Activated CD4-positive, alpha-beta memory T cell treated with anti-CD3 and anti-CD28 coated beads for 36 hours (primary cell): ENCODE measurements at regions of chr22 and their contacts with region 1.

Region 1: DNA sequence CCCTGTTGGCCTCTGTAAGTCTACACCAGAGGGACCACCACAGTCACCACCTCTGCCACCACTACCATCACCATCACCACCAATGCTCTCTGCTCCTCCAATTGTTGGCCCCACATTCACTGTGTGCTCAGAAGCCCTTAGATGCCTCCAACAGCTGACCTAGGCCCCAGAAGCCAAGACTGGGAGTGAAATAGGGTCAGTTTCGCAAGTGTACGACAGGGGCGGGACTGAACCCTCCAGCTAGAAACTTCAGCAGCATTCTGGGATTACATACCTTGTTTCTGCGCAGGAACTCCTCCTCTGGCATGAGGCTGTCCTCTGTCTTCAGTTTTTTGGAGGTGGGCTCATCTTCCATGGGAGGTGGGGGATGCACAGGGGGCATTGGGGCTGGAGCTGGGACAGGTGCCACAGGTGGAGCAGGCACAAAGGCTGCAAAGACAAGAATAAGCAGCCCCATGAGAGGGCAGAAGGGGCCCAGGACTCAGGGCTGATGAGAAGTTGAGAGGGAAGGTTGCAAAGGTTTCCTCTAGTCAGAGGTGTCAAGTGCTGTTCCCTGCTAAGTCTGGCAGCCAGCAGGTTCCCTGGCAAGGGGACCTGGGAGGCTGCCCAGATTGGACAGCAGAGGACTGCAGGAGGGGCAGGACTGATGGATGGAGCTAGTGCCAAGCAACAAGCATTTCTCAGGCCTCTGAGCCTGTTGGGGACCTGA is 10.2 kb upstream of the TBC1D10A start:
- DNase-seq: no peak
- H3K4me3 Mint-ChIP-seq: no peak overlapping the region
- H3K27ac Mint-ChIP-seq: peak overlapping the region; percentile 54
- H3K4me1 Mint-ChIP-seq: peaks cover 41% of the 10 kb centered on the region
- H3K27me3 Mint-ChIP-seq: no peaks in the 10 kb centered on the region

Region 2: GRCh38 chr22:30253205-30253852 is 83.6 kb before region 1 on chr22:
- CTCF ChIA-PET with region 1: no interaction called
- POLR2A ChIA-PET with region 1: no interaction called
- intact Hi-C with region 1: no loop called
- DNase-seq: no peak
- H3K4me3 Mint-ChIP-seq: no peak overlapping the region
- H3K27ac Mint-ChIP-seq: no peak overlapping the region
- H3K4me1 Mint-ChIP-seq: peaks cover 26% of the 10 kb centered on the region
- H3K27me3 Mint-ChIP-seq: no peaks in the 10 kb centered on the region

Region 3: DNA sequence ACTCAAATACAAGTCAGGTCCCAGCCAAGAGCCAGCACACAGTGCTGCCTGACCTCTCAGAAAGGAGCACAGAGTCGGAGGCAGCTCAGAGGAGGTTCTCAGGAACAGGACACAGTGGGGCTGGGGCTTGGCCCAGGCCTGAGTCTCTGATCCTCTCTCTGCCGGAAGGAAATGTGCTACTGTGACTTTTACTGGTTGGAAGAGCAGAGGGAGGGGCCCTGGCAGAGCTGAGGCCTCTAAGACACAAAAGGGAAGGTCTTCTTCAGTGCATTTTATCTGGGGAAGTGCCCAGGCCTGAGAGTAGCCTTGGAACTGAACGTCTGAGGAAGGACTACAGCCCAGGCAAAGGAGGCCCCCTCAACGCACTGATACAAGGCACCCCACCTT is 31.4 kb before region 1 on chr22:
- CTCF ChIA-PET with region 1: no interaction called
- POLR2A ChIA-PET with region 1: no interaction called
- intact Hi-C with region 1: loop called (anchors 1 kb)
- DNase-seq: peak; percentile 74
- H3K4me3 Mint-ChIP-seq: peak overlapping the region; percentile 69
- H3K27ac Mint-ChIP-seq: peak overlapping the region; percentile 98
- H3K4me1 Mint-ChIP-seq: peaks cover 96% of the 10 kb centered on the region
- H3K27me3 Mint-ChIP-seq: no peaks in the 10 kb centered on the region

Region 4: GRCh38 chr22:30362651-30363281 is 25.9 kb after region 1 on chr22:
- CTCF ChIA-PET with region 1: no interaction called
- POLR2A ChIA-PET with region 1: no interaction called
- intact Hi-C with region 1: no loop called
- DNase-seq: no peak
- H3K4me3 Mint-ChIP-seq: no peak overlapping the region
- H3K27ac Mint-ChIP-seq: no peak overlapping the region
- H3K4me1 Mint-ChIP-seq: peaks cover 4% of the 10 kb centered on the region
- H3K27me3 Mint-ChIP-seq: no peaks in the 10 kb centered on the region